ENCODE measurements at regions of chr15 and their contacts with region 1.

Region 1: GRCh38 chr15:71011503-71012155 is 103.6 kb upstream of the THSD4 start:
- DNase-seq: peak in 1 of 5 donors; percentile 23
- ATAC-seq: peak in 3 of 4 donors; percentile 71 to 86 (median 82)
- H3K4me3 ChIP-seq: peak overlapping the region in 5 of 12 donors; percentile 15 to 56 (median 52)
- H3K27ac ChIP-seq: peak overlapping the region in 3 of 12 donors; percentile 7 to 69 (median 55)
- H3K4me1 ChIP-seq: peaks cover 0 to 11% (median 0%) of the 10 kb centered on the region in 12 donors
- H3K27me3 ChIP-seq: no peaks in the 10 kb centered on the region
- CTCF ChIP-seq: peak; percentile 57 to 78 (median 72)
- POLR2A ChIP-seq: no peak

Region 2: DNA sequence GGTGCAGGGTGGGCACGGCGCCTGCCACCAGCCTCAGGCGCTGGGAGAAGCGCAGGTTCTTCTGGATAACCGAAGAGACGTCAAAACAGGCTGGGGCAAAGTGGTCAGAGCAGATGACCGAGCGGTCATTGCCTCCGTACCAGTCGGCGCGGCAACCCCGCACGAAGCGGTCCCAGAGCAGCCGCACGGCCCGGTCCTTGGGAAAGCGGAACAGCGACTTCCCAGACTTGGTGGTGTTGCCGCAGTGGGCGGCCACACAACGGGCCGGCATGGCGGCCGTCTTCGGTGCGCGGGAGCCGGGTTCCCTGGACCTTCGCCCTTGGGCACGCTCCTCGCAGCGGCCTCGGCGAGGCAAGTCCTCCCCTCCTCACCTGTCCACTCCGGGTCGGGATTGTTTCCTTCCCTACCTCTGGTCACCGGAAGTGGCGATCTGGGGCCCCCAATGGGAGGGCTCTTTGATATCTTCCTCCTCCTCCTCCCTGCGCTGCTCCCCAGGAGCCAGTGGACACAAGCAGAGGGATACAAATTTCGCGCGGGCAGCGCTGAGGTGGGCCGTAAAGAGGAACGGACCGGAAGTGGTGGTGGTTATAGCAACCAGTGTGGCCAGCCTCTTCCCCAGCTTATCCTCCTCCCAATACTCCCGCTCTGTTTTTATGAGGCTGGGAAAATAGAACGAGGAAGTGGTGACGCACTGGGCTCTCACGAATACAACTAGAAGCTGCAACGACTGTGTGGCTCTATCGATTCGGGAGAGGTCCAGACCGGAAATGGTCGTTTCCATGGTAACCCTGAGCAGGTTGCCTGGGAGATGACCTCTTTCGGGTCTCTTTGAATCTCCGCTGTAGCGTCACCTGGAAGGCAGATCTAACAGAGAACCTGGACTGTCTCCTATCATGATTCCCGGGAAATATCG is 119.4 kb before region 1 on chr15 and contains the starts of genes LRRC49 and THAP10:
- intact Hi-C with region 1: loop called in 3 of 10 experiments (anchors 10 kb)
- DNase-seq: peak; percentile 88 to 93 (median 90)
- ATAC-seq: peak; percentile 96 to 99 (median 98)
- H3K4me3 ChIP-seq: peak within 1 kb of the TSS; percentile 33 to 83 (median 74)
- H3K27ac ChIP-seq: peak within 1 kb of the TSS; percentile 19 to 83 (median 68)
- H3K4me1 ChIP-seq: peaks cover 0 to 23% (median 6%) of the 10 kb centered on the region in 12 donors
- H3K27me3 ChIP-seq: peaks cover 0 to 3% (median 0%) of the 10 kb centered on the region in 9 donors
- CTCF ChIP-seq: no peak
- POLR2A ChIP-seq: no peak
- total RNA-seq, gene LRRC49: 22.4 to 123 (median 60.3) TPM
- total RNA-seq, gene THAP10: 2.8 to 5.9 (median 5.1) TPM

Region 3: GRCh38 chr15:71103102-71103676 is 91.6 kb after region 1 on chr15:
- intact Hi-C with region 1: loop called in 6 of 10 experiments (anchors 2 to 10 kb)
- DNase-seq: peak in 1 of 5 donors; percentile 38
- ATAC-seq: peak in 3 of 4 donors; percentile 77 to 80 (median 78)
- H3K4me3 ChIP-seq: no peak overlapping the region
- H3K27ac ChIP-seq: no peak overlapping the region
- H3K4me1 ChIP-seq: peaks cover 0 to 3% (median 0%) of the 10 kb centered on the region in 12 donors
- H3K27me3 ChIP-seq: no peaks in the 10 kb centered on the region
- CTCF ChIP-seq: peak; percentile 18 to 54 (median 42)
- POLR2A ChIP-seq: no peak

Region 4: DNA sequence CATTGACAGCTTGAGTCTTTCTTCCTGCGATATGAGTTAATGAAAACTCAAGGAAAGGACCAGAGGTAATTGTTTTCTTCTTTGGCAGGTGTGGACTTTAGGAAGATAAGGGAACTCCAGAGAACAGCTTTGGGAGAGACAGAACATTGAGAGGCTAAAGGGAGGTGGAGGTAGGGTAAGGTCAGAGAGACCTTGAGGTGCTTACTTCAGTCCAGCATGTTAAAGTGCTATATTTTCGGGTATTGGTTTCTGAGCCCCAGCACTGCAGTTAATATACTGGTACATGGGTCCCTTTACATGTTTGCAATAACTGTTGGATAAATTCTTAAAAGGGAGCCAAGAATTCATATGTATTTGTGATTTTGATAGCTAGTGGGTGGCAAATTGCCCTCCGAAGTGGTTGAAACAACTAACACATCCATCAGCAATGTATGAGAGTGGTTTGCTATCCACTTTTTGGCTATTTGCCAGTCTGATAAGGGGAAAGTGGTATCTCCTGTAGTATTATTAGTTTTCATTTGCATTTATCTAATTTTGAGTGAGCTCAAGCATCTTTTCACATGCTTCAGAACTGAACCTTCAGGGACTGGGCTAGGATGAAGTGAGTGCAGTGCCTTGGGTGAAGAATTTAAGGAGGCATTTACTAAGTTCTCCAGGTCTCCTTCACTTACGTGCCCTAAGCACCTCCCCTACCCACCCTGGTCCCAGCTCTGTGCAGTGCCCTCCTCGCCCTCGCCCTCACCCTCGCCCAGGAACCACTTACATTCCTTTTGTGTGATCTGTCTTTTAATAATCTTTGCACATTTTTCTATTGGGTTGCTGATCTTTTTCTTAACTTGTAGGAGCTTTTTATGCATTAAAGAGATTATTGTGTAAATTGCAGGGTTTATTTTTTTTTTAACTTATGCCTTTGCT is 426.0 kb after region 1 on chr15:
- intact Hi-C with region 1: loop called in 8 of 10 experiments (anchors 1 to 10 kb)
- DNase-seq: no peak
- ATAC-seq: peak in 1 of 4 donors; percentile 57
- H3K4me3 ChIP-seq: no peak overlapping the region
- H3K27ac ChIP-seq: peak overlapping the region in 4 of 12 donors; percentile 15 to 54 (median 36)
- H3K4me1 ChIP-seq: peaks cover 0 to 14% (median 6%) of the 10 kb centered on the region in 12 donors
- H3K27me3 ChIP-seq: no peaks in the 10 kb centered on the region
- CTCF ChIP-seq: no peak
- POLR2A ChIP-seq: no peak

Region 5: DNA sequence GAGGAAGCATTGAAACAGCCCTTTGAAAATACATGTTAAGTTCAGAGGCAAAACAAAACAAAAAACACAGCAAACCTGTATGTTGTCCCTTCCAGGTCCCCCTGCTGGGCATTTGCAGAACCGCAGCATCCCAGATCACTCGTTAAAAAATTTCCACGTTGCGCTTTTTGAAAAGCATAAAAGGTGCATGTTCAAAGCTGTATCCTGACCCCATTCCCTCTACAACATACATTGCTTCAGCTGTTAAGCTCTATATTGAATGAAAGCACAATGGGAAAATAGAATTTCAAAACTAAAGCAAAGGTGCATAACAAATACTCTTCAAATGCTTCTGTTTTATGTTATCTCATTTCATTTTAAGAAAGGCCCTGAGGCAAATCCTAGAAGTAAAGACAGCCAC is 431.9 kb after region 1 on chr15:
- intact Hi-C with region 1: loop called in 8 of 10 experiments (anchors 1 to 10 kb)
- DNase-seq: peak in 3 of 5 donors; percentile 40 to 43 (median 42)
- ATAC-seq: peak in 2 of 4 donors; percentile 7 to 10
- H3K4me3 ChIP-seq: no peak overlapping the region
- H3K27ac ChIP-seq: peak overlapping the region in 5 of 12 donors; percentile 13 to 65 (median 41)
- H3K4me1 ChIP-seq: peaks cover 0 to 50% (median 15%) of the 10 kb centered on the region in 12 donors
- H3K27me3 ChIP-seq: no peaks in the 10 kb centered on the region
- CTCF ChIP-seq: peak; percentile 70 to 88 (median 82)
- POLR2A ChIP-seq: no peak